Ascending aorta (tissue), 2 donors: ENCODE measurements at regions of chr3 and their contacts with region 1.

Region 1: GRCh38 chr3:32667122-32667521 is 17.9 kb upstream of the CNOT10 start:
- DNase-seq: no peak
- H3K4me3 ChIP-seq: no peak overlapping the region
- H3K27ac ChIP-seq: no peak overlapping the region
- H3K4me1 ChIP-seq: no peaks in the 10 kb centered on the region
- H3K27me3 ChIP-seq: no peaks in the 10 kb centered on the region
- CTCF ChIP-seq: no peak

Region 2: GRCh38 chr3:32374788-32375595 is 292.1 kb before region 1 on chr3:
- intact Hi-C with region 1: loop called (anchors 10 kb)
- DNase-seq: peak in 1 of 2 donors; percentile 79
- H3K4me3 ChIP-seq: no peak overlapping the region
- H3K27ac ChIP-seq: no peak overlapping the region
- H3K4me1 ChIP-seq: no peaks in the 10 kb centered on the region
- H3K27me3 ChIP-seq: no peaks in the 10 kb centered on the region
- CTCF ChIP-seq: peak; percentile 63 to 70 (median 64)

Region 3: GRCh38 chr3:32510075-32510724 is 156.9 kb before region 1 on chr3:
- intact Hi-C with region 1: loop called (anchors 1 kb)
- DNase-seq: peak in 1 of 2 donors; percentile 79
- H3K4me3 ChIP-seq: no peak overlapping the region
- H3K27ac ChIP-seq: no peak overlapping the region
- H3K4me1 ChIP-seq: no peaks in the 10 kb centered on the region
- H3K27me3 ChIP-seq: no peaks in the 10 kb centered on the region
- CTCF ChIP-seq: peak; percentile 52 to 78 (median 55)